Activated T-helper 1 cell treated with anti-CD3 and anti-CD28 coated beads, Interleukin-12 subunit alpha, Interleukin-12 subunit beta, Interleukin-2, Interleukin-4 antibody, amounts not matched to agents 30 ng/mL and 10 ng/mL and 1 ng/mL, durations not matched to agents 14 hours and 24 hours and 36 hours (primary cell): ENCODE measurements at regions of chr14 and their contacts with region 1.

Region 1: DNA sequence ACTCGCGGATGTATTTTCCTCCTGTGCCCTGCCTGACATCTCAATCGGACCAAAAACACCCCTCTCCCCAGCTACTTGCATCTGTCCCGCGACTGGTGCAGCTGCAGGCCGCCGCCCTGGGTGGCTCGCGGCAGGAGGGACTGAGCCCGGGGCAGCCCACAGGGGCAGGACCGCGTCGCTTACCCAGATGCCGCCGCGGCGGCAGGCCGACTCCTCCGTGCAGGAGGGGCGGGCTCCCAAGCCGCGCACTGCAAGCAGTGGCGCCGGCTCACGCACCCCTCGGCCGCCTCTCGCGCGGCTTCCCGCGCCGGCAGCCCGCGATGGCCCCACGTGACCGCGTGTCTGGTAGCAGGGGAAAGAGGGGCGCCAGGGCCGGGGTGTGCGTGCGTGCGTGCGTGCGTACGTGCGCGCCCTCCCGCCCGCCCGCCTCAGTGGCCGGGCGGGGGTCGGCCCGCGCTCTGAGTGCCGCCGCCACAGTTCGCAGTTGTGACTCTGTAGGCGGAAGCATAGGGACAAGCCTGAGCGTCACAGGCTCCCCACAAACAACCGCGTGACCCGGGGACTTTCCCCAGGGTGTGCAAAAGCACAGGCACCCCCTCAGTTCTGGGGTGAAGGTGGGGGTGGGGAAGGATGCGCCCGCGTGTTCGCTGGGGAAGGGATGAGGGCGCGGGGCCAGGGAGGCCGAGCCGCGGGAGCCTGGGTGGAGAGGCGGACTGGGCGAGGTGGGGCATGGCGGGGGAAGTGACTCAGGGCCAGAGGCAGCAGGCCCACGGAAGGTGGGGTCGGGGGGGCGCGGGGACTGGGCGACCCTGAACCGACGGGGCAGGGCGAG is at the start of gene ZBTB25:
- DNase-seq: peak; percentile 96
- H3K4me3 Mint-ChIP-seq: peak within 1 kb of the TSS; percentile 96
- H3K27ac Mint-ChIP-seq: peak within 1 kb of the TSS; percentile 100
- H3K4me1 Mint-ChIP-seq: peaks cover 68% of the 10 kb centered on the region
- H3K27me3 Mint-ChIP-seq: peaks cover 2% of the 10 kb centered on the region
- total RNA-seq, gene ZBTB25: 18.6 and 19.6 TPM in 2 replicates

Region 2: GRCh38 chr14:63543000-63543825 is 960.5 kb before region 1 on chr14 and contains the start of gene PPP2R5E:
- intact Hi-C with region 1: loop called (anchors 10 kb)
- DNase-seq: peak; percentile 97
- H3K4me3 Mint-ChIP-seq: peak within 1 kb of the TSS; percentile 97
- H3K27ac Mint-ChIP-seq: peak within 1 kb of the TSS; percentile 95
- H3K4me1 Mint-ChIP-seq: peaks cover 36% of the 10 kb centered on the region
- H3K27me3 Mint-ChIP-seq: peaks cover 2% of the 10 kb centered on the region
- total RNA-seq, gene PPP2R5E: 46.3 and 47.6 TPM in 2 replicates

Region 3: GRCh38 chr14:64338616-64339316 is 164.9 kb before region 1 on chr14:
- intact Hi-C with region 1: loop called (anchors 1 kb)
- DNase-seq: peak; percentile 85
- H3K4me3 Mint-ChIP-seq: peak overlapping the region; percentile 81
- H3K27ac Mint-ChIP-seq: peak overlapping the region; percentile 84
- H3K4me1 Mint-ChIP-seq: peaks cover 29% of the 10 kb centered on the region
- H3K27me3 Mint-ChIP-seq: no peaks in the 10 kb centered on the region

Region 4: GRCh38 chr14:64465191-64465822 is 38.4 kb before region 1 on chr14 and contains the start of gene AKAP5:
- intact Hi-C with region 1: loop called (anchors 2 kb)
- DNase-seq: peak; percentile 62
- H3K4me3 Mint-ChIP-seq: peak within 1 kb of the TSS; percentile 88
- H3K27ac Mint-ChIP-seq: peak within 1 kb of the TSS; percentile 88
- H3K4me1 Mint-ChIP-seq: peaks cover 35% of the 10 kb centered on the region
- H3K27me3 Mint-ChIP-seq: peaks cover 6% of the 10 kb centered on the region
- total RNA-seq, gene AKAP5: 1.1 and 1.5 TPM in 2 replicates

Region 5: GRCh38 chr14:64584190-64584589 is 80.5 kb after region 1 on chr14:
- intact Hi-C with region 1: no loop called
- DNase-seq: no peak
- H3K4me3 Mint-ChIP-seq: no peak overlapping the region
- H3K27ac Mint-ChIP-seq: no peak overlapping the region
- H3K4me1 Mint-ChIP-seq: no peaks in the 10 kb centered on the region
- H3K27me3 Mint-ChIP-seq: peaks cover 3% of the 10 kb centered on the region

Region 6: GRCh38 chr14:64914237-64914971 is 410.7 kb after region 1 on chr14 and contains the start of gene CHURC1:
- intact Hi-C with region 1: loop called (anchors 1 kb)
- DNase-seq: peak; percentile 93
- H3K4me3 Mint-ChIP-seq: peak within 1 kb of the TSS; percentile 88
- H3K27ac Mint-ChIP-seq: peak within 1 kb of the TSS; percentile 94
- H3K4me1 Mint-ChIP-seq: peaks cover 51% of the 10 kb centered on the region
- H3K27me3 Mint-ChIP-seq: peaks cover 5% of the 10 kb centered on the region
- total RNA-seq, gene CHURC1: 50.7 and 51.3 TPM in 2 replicates

Region 7: GRCh38 chr14:65229751-65230749 is 726.4 kb after region 1 on chr14:
- intact Hi-C with region 1: no loop called
- DNase-seq: peak; percentile 34
- H3K4me3 Mint-ChIP-seq: peak overlapping the region; percentile 81
- H3K27ac Mint-ChIP-seq: peak overlapping the region; percentile 93
- H3K4me1 Mint-ChIP-seq: peaks cover 51% of the 10 kb centered on the region
- H3K27me3 Mint-ChIP-seq: peaks cover 2% of the 10 kb centered on the region